ENCODE measurements at regions of chr1 and their contacts with region 1.

Region 1: GRCh38 chr1:93909146-93910050 is at the start of gene GCLM:
- DNase-seq: peak; percentile 89
- H3K4me3 Mint-ChIP-seq: peak within 1 kb of the TSS; percentile 94
- H3K27ac Mint-ChIP-seq: peak within 1 kb of the TSS; percentile 94
- H3K4me1 Mint-ChIP-seq: peaks cover 40% of the 10 kb centered on the region
- H3K27me3 Mint-ChIP-seq: peaks cover 20% of the 10 kb centered on the region
- total RNA-seq, gene GCLM: 20.2 and 23.8 TPM in 2 replicates

Region 2: DNA sequence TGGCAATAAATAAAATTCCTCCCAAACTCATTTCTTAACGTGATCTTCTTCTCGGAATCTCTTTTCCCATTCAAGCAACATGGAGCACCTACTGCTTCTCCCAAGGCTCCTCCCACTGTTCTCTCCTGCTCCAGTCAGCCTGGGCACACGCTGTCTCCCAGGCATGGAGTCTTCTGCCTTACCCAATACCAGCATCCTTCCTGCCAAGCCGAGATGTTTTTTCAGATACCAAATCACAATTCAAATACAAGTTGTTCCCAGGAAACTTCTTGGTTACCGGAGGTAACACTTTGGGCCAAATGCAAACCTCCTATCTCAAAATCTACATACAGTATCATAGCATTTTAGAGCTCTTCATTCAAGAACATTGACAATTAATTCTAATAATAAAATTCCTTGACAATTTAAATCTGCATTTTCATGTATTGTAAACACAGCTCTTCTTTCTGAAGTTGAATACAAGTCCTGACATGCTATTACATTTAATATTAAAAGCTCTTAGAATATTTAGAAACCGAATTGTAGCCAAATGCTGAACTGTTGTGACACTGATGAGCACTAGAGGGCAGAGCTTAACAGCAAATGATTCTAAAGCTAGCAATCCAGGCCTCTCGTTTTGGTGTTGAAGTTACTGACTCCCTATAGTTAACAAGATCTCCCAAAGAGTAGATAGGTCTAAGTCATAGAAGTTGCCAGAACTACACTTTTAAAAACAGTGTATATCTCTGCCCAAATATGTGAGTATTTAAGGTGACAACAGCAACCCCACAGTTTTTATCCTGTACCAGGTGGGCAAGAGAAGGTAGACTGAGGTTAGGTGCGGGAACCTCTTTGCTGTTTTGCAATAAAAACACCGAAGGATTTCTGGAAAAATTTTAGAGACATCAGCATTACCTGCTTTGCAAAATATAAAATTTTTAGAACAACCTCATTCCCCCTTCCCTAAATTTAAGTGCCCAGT is 280.0 kb before region 1 on chr1:
- intact Hi-C with region 1: loop called (anchors 5 kb)
- DNase-seq: peak; percentile 24
- H3K4me3 Mint-ChIP-seq: no peak overlapping the region
- H3K27ac Mint-ChIP-seq: no peak overlapping the region
- H3K4me1 Mint-ChIP-seq: no peaks in the 10 kb centered on the region
- H3K27me3 Mint-ChIP-seq: peaks cover 7% of the 10 kb centered on the region

Region 3: DNA sequence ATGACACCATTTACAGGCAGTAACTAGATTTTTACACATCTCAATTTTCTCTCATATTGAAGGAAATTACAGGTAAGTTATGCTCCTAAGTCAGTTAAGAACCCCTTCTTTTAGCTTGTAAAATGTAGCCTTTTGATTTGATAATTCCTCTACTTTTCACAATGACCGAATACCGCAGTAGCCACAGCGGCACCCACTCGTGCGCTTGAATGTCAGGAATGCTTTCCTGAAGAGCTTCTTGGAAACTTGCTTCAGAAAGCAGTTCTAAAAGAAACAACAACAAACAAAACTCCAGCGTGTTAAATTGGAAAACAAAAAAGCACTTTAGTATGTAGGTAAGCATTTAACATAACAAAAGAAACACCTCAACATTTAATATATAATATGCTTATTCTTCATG is 20.5 kb before region 1 on chr1:
- intact Hi-C with region 1: no loop called
- DNase-seq: no peak
- H3K4me3 Mint-ChIP-seq: no peak overlapping the region
- H3K27ac Mint-ChIP-seq: no peak overlapping the region
- H3K4me1 Mint-ChIP-seq: no peaks in the 10 kb centered on the region
- H3K27me3 Mint-ChIP-seq: no peaks in the 10 kb centered on the region

Region 4: GRCh38 chr1:94017155-94017829 is 107.9 kb after region 1 on chr1:
- intact Hi-C with region 1: loop called (anchors 2 kb)
- DNase-seq: peak; percentile 42
- H3K4me3 Mint-ChIP-seq: peak overlapping the region; percentile 28
- H3K27ac Mint-ChIP-seq: peak overlapping the region; percentile 81
- H3K4me1 Mint-ChIP-seq: peaks cover 40% of the 10 kb centered on the region
- H3K27me3 Mint-ChIP-seq: peaks cover 6% of the 10 kb centered on the region

Region 5: DNA sequence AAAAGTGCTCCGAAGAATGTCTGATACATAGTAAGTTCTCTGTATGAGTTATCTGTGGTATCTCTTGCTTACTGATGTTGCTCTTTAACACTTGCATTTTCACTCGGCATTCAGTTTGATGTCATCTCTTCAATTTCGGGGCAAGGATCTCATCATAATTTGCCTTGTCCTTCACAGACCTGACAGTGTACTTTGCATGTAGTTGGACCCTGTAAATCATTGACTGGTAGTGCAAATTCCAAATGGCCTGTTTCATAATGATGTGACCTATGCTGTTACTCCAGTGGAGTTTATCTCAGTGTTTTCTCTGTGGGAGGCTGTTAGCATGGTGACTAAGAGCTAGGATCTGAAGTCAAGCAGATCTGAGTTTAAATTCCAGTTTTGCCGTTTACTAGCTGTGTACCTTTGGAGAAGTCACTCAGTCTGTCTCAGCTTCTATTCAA is 474.6 kb after region 1 on chr1:
- intact Hi-C with region 1: loop called (anchors 10 kb)
- DNase-seq: no peak
- H3K4me3 Mint-ChIP-seq: peak overlapping the region; percentile 17
- H3K27ac Mint-ChIP-seq: peak overlapping the region; percentile 59
- H3K4me1 Mint-ChIP-seq: peaks cover 25% of the 10 kb centered on the region
- H3K27me3 Mint-ChIP-seq: peaks cover 2% of the 10 kb centered on the region

Region 6: DNA sequence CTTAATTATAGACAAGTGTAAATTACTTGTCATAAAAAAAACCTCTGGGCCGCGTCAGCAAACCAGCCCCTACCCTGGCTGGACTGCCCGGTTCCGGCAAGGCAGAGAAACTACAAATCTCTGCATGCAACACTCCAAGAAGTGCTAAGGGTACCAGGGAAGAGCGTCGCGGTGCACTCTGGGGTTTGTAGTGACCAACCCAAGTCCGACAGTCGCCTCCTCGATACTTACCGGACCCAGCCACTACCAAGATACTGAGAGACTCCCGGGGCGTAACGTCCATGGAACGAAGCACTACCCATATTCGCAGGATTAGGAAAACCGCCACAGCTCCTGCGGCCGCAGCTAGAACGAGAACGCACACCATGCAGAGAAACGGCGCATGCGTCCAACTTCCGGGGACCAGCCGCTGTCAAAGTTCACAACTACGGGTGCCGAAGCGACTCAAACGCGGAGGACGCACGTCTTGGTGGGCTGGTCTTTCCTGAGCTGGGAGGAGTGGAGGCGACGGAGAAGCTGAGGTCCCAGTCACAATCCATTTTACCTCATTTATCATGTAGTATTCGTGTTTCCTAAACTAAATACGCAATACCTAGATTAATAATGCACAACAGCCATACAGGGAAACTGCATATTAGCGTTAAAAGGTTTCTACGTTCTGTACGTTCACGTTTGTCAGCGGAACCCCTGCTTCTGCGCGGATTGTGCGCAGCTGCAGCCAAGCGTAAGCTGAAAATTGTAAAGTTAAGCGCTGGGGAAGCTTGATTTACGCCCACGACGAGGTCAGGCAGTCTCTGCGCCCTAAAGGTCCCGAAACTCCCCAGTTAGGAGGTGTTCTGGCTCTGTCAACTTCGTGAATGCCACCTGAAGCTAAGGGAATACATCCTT is 1163.4 kb after region 1 on chr1 and contains the start of gene ALG14:
- intact Hi-C with region 1: loop called (anchors 2 kb)
- DNase-seq: peak; percentile 85
- H3K4me3 Mint-ChIP-seq: peak within 1 kb of the TSS; percentile 94
- H3K27ac Mint-ChIP-seq: peak within 1 kb of the TSS; percentile 93
- H3K4me1 Mint-ChIP-seq: peaks cover 18% of the 10 kb centered on the region
- H3K27me3 Mint-ChIP-seq: no peaks in the 10 kb centered on the region
- total RNA-seq, gene ALG14: 1.9 and 2.4 TPM in 2 replicates